A673 (cell line): ENCODE measurements at regions of chr19 and their contacts with region 1.

Region 1: GRCh38 chr19:42596391-42597072 is 1.8 kb upstream of the CEACAM8 start:
- DNase-seq: peak; percentile 19
- H3K4me3 ChIP-seq: no peak overlapping the region
- H3K27ac ChIP-seq: no peak overlapping the region
- H3K4me1 ChIP-seq: no peaks in the 10 kb centered on the region
- H3K27me3 ChIP-seq: peaks cover 6% of the 10 kb centered on the region
- CTCF ChIP-seq: peak; percentile 94

Region 2: GRCh38 chr19:40990972-40991381 is 1605.6 kb before region 1 on chr19 and contains the start of gene CYP2B6:
- CTCF ChIA-PET with region 1: no interaction called
- POLR2A ChIA-PET with region 1: no interaction called
- intact Hi-C with region 1: no loop called
- DNase-seq: no peak
- H3K4me3 ChIP-seq: no peak within 1 kb of the TSS
- H3K27ac ChIP-seq: no peak within 1 kb of the TSS
- H3K4me1 ChIP-seq: no peaks in the 10 kb centered on the region
- H3K27me3 ChIP-seq: no peaks in the 10 kb centered on the region
- CTCF ChIP-seq: no peak
- total RNA-seq, gene CYP2B6: not detected in 2 replicates

Region 3: GRCh38 chr19:42450314-42450934 is 146.1 kb before region 1 on chr19:
- CTCF ChIA-PET with region 1: no interaction called
- POLR2A ChIA-PET with region 1: no interaction called
- intact Hi-C with region 1: loop called (anchors 1 kb)
- DNase-seq: peak; percentile 77
- H3K4me3 ChIP-seq: no peak overlapping the region
- H3K27ac ChIP-seq: no peak overlapping the region
- H3K4me1 ChIP-seq: no peaks in the 10 kb centered on the region
- H3K27me3 ChIP-seq: no peaks in the 10 kb centered on the region
- CTCF ChIP-seq: peak; percentile 90

Region 4: DNA sequence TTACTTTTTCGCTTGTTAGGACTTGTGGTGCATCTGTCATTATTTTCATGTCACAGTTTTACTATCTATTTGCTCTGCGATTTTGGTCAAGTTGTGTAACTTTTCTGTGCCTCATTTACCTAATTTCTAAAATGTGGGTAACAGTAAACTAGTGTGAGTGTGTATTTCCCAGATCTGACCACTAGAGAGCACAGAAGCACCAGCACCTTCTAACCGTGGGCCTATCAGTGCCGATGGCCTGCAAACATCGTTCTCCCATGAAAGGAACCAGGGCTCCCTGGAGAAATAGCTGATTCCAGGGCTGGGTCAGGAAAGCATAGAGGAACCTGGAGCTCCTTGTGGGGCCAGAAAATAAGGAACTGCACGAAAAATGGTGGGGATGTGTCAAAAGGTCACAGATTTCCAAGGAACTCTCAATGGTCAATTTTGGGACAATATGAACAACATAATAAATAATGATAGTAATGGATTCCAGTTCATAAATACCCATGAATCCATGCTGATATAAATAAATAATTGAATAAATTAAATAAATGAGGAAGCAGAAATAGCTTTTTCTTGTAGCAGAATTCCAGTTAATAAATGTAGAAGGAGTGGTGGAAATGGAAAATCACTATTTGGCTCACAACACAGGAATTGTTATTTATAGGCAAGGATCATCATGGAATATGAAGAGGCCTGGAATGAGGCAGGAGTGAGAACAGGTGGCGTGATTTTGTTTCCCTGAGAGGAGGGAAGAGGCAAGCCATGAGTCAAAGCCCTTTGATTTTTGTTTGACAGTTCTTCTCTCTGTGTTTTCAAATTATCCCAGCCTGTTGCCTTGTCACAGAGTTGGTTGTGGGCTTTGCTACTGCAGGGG is 33.0 kb before region 1 on chr19:
- CTCF ChIA-PET with region 1: no interaction called
- POLR2A ChIA-PET with region 1: no interaction called
- intact Hi-C with region 1: loop called (anchors 5 kb)
- DNase-seq: peak; percentile 58
- H3K4me3 ChIP-seq: no peak overlapping the region
- H3K27ac ChIP-seq: no peak overlapping the region
- H3K4me1 ChIP-seq: no peaks in the 10 kb centered on the region
- H3K27me3 ChIP-seq: peaks cover 4% of the 10 kb centered on the region
- CTCF ChIP-seq: peak; percentile 70

Region 5: GRCh38 chr19:42573642-42574041 is 22.9 kb before region 1 on chr19:
- CTCF ChIA-PET with region 1: no interaction called
- POLR2A ChIA-PET with region 1: no interaction called
- intact Hi-C with region 1: no loop called
- DNase-seq: no peak
- H3K4me3 ChIP-seq: no peak overlapping the region
- H3K27ac ChIP-seq: no peak overlapping the region
- H3K4me1 ChIP-seq: no peaks in the 10 kb centered on the region
- H3K27me3 ChIP-seq: peaks cover 27% of the 10 kb centered on the region
- CTCF ChIP-seq: no peak